Caco-2 (cell line): ENCODE measurements at regions of chr6 and their contacts with region 1.

Region 1: GRCh38 chr6:104525677-104526312 is 333.9 kb downstream of the HACE1 start:
- DNase-seq: peak; percentile 75 to 82
- H3K4me3 ChIP-seq: peak overlapping the region; percentile 21; the same call in 1 of the 2 replicates
- H3K4me3 Mint-ChIP-seq: peak overlapping the region; percentile 75
- H3K27ac Mint-ChIP-seq: peak overlapping the region; percentile 69
- H3K4me1 ChIP-seq: peaks cover 16% of the 10 kb centered on the region
- H3K4me1 Mint-ChIP-seq: peaks cover 35% of the 10 kb centered on the region
- H3K27me3 ChIP-seq: no peaks in the 10 kb centered on the region
- H3K27me3 Mint-ChIP-seq: no peaks in the 10 kb centered on the region
- CTCF ChIP-seq: peak; percentile 89 to 94

Region 2: GRCh38 chr6:103797738-103798137 is 728.1 kb before region 1 on chr6:
- CTCF ChIA-PET with region 1: no interaction called
- POLR2A ChIA-PET with region 1: no interaction called
- intact Hi-C with region 1: loop called (anchors 5 kb)
- DNase-seq: no peak
- H3K4me3 ChIP-seq: no peak overlapping the region
- H3K4me3 Mint-ChIP-seq: no peak overlapping the region
- H3K27ac Mint-ChIP-seq: no peak overlapping the region
- H3K4me1 ChIP-seq: no peaks in the 10 kb centered on the region
- H3K4me1 Mint-ChIP-seq: no peaks in the 10 kb centered on the region
- H3K27me3 ChIP-seq: no peaks in the 10 kb centered on the region
- H3K27me3 Mint-ChIP-seq: no peaks in the 10 kb centered on the region
- CTCF ChIP-seq: peak; percentile 43 to 59

Region 3: DNA sequence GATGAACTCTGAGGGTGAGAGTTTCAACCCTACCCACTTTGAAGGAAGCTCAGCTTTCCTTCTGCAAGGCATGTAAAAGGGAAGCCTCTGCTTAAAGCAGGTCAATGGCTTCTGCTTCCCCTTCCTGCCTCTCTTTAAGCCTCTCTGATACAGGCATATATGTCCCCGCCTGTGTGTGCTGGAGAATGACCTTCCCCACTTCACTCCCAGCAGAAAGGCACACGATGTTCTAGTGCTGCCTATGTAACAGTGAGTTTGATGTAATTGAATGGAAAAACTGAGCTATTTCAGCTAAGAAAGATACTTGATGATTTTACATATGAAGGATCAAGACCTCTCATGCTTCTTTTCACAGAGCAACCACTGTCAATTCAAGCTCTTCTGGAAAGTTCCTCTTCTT is 298.3 kb before region 1 on chr6:
- CTCF ChIA-PET with region 1: interaction called, 5 read pairs
- POLR2A ChIA-PET with region 1: no interaction called
- intact Hi-C with region 1: loop called (anchors 5 kb)
- DNase-seq: no peak
- H3K4me3 ChIP-seq: no peak overlapping the region
- H3K4me3 Mint-ChIP-seq: no peak overlapping the region
- H3K27ac Mint-ChIP-seq: no peak overlapping the region
- H3K4me1 ChIP-seq: peaks cover 27% of the 10 kb centered on the region
- H3K4me1 Mint-ChIP-seq: peaks cover 14% of the 10 kb centered on the region
- H3K27me3 ChIP-seq: no peaks in the 10 kb centered on the region
- H3K27me3 Mint-ChIP-seq: no peaks in the 10 kb centered on the region
- CTCF ChIP-seq: no peak

Region 4: GRCh38 chr6:104281370-104281769 is 244.4 kb before region 1 on chr6:
- CTCF ChIA-PET with region 1: no interaction called
- POLR2A ChIA-PET with region 1: no interaction called
- intact Hi-C with region 1: no loop called
- DNase-seq: peak in 1 of 2 experiments; percentile 7
- H3K4me3 ChIP-seq: no peak overlapping the region
- H3K4me3 Mint-ChIP-seq: no peak overlapping the region
- H3K27ac Mint-ChIP-seq: no peak overlapping the region
- H3K4me1 ChIP-seq: peaks cover 5% of the 10 kb centered on the region; the same call in 1 of the 2 replicates
- H3K4me1 Mint-ChIP-seq: no peaks in the 10 kb centered on the region
- H3K27me3 ChIP-seq: no peaks in the 10 kb centered on the region
- H3K27me3 Mint-ChIP-seq: no peaks in the 10 kb centered on the region
- CTCF ChIP-seq: no peak

Region 5: GRCh38 chr6:104332364-104332763 is 193.4 kb before region 1 on chr6:
- CTCF ChIA-PET with region 1: no interaction called
- POLR2A ChIA-PET with region 1: no interaction called
- intact Hi-C with region 1: loop called (anchors 2 kb)
- DNase-seq: no peak
- H3K4me3 ChIP-seq: no peak overlapping the region
- H3K4me3 Mint-ChIP-seq: no peak overlapping the region
- H3K27ac Mint-ChIP-seq: no peak overlapping the region
- H3K4me1 ChIP-seq: no peaks in the 10 kb centered on the region
- H3K4me1 Mint-ChIP-seq: no peaks in the 10 kb centered on the region
- H3K27me3 ChIP-seq: no peaks in the 10 kb centered on the region
- H3K27me3 Mint-ChIP-seq: no peaks in the 10 kb centered on the region
- CTCF ChIP-seq: no peak

Region 6: DNA sequence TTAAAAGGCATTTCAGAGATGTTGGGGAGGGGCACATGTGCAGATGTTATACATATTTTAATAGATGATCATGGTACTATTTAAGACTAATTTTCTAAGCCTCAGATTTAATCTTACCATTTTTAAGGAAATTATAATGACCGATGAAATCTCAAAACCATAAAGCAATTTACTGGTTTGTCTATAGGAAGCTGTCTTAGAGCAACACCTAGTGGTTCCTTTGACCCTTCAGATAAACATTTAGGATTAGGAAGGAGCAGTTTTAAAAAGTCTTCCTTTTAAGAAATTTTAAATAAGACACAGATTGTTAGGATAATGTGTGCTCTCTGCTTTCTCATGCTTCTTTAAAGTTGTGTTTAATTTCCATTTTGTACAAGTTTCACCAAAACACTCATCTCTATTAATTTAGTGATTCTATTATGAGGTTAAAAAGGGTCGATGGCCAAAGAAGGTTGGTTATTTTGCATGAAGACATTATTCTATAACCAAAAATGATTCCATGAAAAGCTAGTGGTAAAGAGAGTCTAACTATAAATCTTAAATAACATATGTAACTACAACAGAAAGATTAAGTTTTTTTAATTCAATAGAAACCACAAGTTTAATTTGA is 42.5 kb before region 1 on chr6:
- CTCF ChIA-PET with region 1: no interaction called
- POLR2A ChIA-PET with region 1: no interaction called
- intact Hi-C with region 1: loop called (anchors 1 kb)
- DNase-seq: no peak
- H3K4me3 ChIP-seq: no peak overlapping the region
- H3K4me3 Mint-ChIP-seq: no peak overlapping the region
- H3K27ac Mint-ChIP-seq: no peak overlapping the region
- H3K4me1 ChIP-seq: no peaks in the 10 kb centered on the region
- H3K4me1 Mint-ChIP-seq: no peaks in the 10 kb centered on the region
- H3K27me3 ChIP-seq: no peaks in the 10 kb centered on the region; the same call in 1 of the 2 replicates
- H3K27me3 Mint-ChIP-seq: no peaks in the 10 kb centered on the region
- CTCF ChIP-seq: peak; percentile 22 to 40